ENCODE measurements at regions of chr10 and their contacts with region 1.

Region 1: DNA sequence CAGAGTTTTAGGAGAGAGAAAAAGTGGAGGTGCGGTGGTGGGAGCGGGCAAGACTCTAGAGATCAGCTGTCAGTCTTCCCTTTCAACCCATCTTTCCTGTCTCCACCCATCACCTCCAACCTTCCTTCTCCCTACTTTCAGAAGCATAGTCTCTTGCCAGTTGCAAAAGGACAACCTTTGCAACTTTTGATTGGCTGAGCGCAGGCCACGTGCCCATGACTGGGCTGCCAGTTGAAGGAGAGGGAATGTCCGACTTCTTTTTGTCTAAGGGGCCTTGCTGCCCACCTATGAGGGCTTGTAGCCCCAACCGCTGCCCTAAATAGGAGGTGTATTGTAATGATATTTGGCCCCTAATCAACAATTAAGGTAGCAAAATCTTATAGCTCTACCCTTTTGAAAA is 12.6 kb downstream of the CYP26A1 start:
- DNase-seq: no peak
- ATAC-seq: no peak
- H3K4me3 ChIP-seq: no peak overlapping the region
- H3K4me3 Mint-ChIP-seq: no peak overlapping the region
- H3K27ac ChIP-seq: no peak overlapping the region
- H3K27ac Mint-ChIP-seq: no peak overlapping the region
- H3K4me1 ChIP-seq: no peaks in the 10 kb centered on the region
- H3K4me1 Mint-ChIP-seq: peaks cover 0 to 2% (median 0%) of the 10 kb centered on the region in 7 donors
- H3K27me3 ChIP-seq: no peaks in the 10 kb centered on the region
- H3K27me3 Mint-ChIP-seq: peaks cover 8 to 15% (median 11%) of the 10 kb centered on the region in 5 donors

Region 2: GRCh38 chr10:93015722-93016121 is 70.6 kb before region 1 on chr10:
- CTCF ChIA-PET with region 1: no interaction called
- POLR2A ChIA-PET with region 1: no interaction called
- intact Hi-C with region 1: loop called in 1 of 2 experiments (anchors 2 kb)
- DNase-seq: no peak
- ATAC-seq: no peak
- H3K4me3 ChIP-seq: no peak overlapping the region
- H3K4me3 Mint-ChIP-seq: no peak overlapping the region
- H3K27ac ChIP-seq: no peak overlapping the region
- H3K27ac Mint-ChIP-seq: no peak overlapping the region
- H3K4me1 ChIP-seq: no peaks in the 10 kb centered on the region
- H3K4me1 Mint-ChIP-seq: no peaks in the 10 kb centered on the region
- H3K27me3 ChIP-seq: no peaks in the 10 kb centered on the region
- H3K27me3 Mint-ChIP-seq: no peaks in the 10 kb centered on the region

Region 3: DNA sequence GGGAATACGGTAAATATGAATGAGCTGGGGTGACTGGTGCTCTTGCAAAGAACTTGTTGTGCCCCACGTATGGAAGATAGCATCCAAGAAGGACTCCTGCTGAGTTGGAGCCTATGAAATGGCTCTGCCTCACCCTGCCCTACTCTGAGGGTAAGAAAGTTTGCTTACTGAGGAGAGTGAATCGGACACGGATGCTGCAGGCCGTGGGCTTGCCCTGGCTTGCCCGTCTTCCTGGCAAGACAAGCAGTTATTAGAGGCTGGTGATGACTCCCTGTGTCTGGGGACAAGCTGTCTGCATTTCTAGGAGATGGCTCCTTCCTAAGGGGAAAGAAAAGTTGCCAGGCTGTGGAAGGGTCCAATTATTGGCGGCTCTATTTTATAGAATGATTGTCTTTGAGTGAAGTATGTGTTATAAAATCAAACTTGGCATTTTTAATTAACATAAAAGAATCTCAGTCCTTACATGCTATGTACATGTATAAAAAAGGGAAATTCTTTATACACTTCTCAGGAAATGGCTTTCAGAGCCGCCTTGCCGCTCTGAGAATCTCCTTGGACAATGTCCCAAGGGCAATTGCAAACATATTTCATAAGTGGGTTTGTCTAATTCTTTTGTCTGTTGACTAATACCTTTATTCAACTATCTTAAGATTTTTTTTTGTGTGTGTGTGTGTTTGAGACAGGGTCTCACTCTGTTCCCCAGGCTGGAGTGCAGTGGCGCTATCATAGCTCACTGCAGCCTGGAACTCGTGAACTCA is 52.0 kb after region 1 on chr10:
- CTCF ChIA-PET with region 1: no interaction called
- POLR2A ChIA-PET with region 1: no interaction called
- intact Hi-C with region 1: no loop called
- DNase-seq: no peak
- ATAC-seq: no peak
- H3K4me3 ChIP-seq: no peak overlapping the region
- H3K4me3 Mint-ChIP-seq: no peak overlapping the region
- H3K27ac ChIP-seq: no peak overlapping the region
- H3K27ac Mint-ChIP-seq: no peak overlapping the region
- H3K4me1 ChIP-seq: no peaks in the 10 kb centered on the region
- H3K4me1 Mint-ChIP-seq: no peaks in the 10 kb centered on the region
- H3K27me3 ChIP-seq: no peaks in the 10 kb centered on the region
- H3K27me3 Mint-ChIP-seq: peaks cover 6 to 32% (median 15%) of the 10 kb centered on the region in 5 donors